ENCODE measurements at regions of chr18 and their contacts with region 1.

Region 1: DNA sequence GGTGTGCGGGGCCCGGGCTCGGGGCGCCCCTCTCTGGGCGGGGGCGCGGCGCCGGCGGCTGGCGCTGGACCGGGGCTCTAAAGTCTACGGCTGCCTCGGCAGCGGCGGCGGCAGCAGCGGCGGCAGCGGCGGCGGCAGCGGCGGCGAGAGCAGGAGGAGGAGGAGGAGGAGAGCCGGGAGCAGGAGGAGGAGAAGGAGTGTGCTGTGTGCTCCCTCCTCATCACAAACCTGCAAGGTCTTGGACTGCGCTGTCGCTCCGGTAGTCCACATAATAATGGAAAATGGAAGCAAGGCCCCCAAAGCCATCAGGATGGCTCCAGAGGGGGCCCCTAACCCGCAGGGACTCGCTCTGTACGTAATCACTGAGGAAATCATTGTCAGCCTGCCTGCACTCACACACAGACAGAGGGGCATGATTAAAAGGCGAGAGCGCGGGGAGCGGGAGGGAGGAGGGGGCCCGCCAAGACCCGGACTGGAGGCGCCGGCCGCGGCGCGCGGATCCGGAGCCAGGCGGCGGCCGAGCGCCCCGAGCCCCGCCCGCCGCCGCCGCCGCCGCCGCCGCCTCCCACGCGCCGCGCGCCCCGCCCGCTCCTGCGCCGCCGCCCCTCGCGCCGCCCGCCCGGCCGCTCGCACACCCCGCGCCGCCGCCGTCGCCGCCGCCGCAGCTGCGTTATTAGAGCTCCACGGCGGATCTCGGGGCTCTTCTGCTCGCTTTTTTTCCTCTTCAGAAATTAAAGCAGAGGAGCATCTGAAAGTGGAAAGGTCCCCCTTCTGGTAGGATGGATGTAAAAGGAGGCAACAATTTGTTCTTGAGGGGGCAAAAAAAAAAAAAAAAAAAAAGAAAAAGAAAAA is at the start of gene ZNF521:
- DNase-seq: peak; percentile 85
- ATAC-seq: peak; percentile 92
- total RNA-seq, gene ZNF521: 29.6 TPM

Region 2: DNA sequence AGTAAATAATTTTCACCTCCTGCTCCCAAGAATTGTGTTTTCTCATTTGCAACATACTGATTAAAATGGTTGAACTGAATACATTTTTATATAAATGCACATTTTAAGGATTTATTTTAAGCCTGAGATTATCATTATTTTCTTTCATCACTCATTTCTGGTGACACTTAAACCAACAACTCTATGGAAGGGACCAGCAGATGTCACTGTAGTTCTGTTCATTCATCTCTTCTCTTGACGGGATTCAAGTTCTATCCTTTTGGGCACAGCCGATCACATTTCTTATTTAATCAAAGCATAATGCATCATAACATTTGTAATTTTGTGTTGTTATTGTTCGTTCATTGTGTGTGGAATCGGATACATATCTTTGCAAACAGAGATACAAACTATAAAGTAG is 473.7 kb before region 1 on chr18:
- intact Hi-C with region 1: loop called (anchors 1 kb)
- DNase-seq: no peak
- ATAC-seq: peak; percentile 57

Region 3: DNA sequence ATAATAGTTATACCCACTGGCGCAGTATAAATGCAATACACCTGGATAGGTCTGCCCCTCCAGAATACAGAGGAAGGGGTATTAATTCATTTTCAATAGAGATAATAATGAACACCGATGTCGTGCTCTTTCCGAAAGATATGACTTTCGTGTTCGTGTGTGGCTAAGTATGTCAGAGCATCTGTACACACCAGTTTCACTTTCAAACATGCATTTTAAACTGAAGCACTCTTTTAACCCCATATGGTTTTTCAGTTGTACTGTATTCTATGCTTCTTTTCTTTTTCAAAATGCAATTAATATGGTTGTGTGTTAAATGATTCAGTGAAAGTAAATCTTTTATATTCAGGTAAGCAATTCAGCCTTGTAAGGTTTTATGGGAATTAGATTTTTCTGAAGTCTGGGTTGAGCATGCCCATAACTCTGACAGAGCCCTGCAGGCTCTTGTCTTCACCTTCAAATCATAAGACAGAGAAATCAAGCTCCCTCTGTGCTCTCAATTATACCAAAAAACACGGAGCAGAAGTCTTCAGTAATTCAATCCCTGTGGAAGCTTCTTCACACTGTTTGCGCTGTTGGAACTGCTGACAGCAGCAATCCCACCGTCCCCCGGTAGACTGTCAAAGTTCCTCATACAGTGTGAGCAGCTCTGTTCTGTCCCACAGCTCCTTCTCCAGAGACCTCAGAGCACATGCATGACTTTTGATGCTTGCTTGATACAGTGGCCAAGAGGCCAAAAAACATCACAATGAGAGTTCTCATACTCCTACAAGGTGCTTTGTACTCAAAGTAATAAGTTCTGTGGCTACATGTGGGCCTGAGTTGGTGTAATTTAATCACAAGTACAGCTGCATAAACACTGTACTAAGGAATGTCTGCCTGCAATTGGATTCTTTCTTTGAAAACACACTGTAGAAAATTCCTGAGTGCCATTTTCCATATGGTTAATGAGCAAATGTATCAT is 186.9 kb before region 1 on chr18:
- intact Hi-C with region 1: loop called (anchors 5 kb)
- DNase-seq: no peak
- ATAC-seq: peak; percentile 65

Region 4: GRCh38 chr18:25284861-25285550 is 67.0 kb before region 1 on chr18:
- intact Hi-C with region 1: loop called (anchors 1 kb)
- DNase-seq: no peak
- ATAC-seq: peak; percentile 85

Region 5: GRCh38 chr18:25832001-25832604 is 480.1 kb after region 1 on chr18:
- intact Hi-C with region 1: loop called (anchors 10 kb)
- DNase-seq: peak; percentile 80
- ATAC-seq: peak; percentile 87

Measured in Right ventricle myocardium inferior (tissue), 1 donor.